ENCODE measurements at regions of chrX and their contacts with region 1.

Region 1: DNA sequence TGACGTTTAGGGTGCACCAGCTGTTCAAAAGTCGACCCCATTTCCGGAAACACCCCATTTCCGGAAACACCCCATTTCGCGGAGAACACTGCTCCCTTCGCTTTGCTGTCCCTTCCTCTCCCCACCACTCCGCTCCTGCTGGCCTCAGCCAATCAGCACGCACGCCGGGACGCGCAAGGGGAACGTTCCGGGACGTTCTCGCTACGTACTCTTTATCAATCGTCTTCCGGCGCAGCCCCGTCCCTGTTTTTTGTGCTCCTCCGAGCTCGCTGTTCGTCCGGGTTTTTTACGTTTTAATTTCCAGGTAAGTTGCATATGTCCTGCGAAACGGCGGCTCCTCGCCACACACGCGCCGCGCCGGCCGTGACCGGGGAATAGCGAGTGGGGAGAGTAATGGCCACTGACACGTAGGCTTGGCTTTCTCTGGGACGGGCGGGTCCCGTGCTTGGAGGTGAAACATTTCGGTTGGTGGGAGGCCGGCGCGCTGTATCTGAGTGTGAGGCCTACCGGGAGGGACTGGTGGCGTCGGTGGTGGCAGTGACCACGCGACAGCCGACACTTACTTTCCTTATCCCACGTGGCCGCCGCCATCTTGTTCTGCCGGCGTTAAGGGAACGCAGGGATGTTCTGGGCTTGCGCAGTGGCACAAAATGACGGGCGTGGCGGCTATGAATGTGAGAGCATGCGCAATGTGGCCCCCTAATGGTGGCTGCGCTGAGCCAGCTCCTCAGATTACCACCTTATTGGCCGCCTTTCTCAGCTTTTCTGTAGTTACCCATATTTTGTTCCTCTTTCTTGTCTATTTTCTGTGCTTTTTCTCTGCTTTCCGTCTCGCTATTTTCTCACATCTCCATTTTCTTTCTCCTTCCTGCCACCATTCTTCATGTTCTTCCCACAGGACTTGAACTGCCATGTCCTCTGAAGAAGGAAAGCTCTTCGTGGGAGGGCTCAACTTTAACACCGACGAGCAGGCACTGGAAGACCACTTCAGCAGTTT is at the start of gene RBM3:
- DNase-seq: peak; percentile 94
- ATAC-seq: peak; percentile 95
- H3K4me3 ChIP-seq: peak within 1 kb of the TSS; percentile 60 to 88 (median 73)
- H3K4me3 Mint-ChIP-seq: peak within 1 kb of the TSS; percentile 88
- H3K27ac ChIP-seq: peak within 1 kb of the TSS; percentile 98 to 99
- H3K27ac Mint-ChIP-seq: peak within 1 kb of the TSS; percentile 97
- H3K4me1 ChIP-seq: peaks cover 16 to 22% of the 10 kb centered on the region in 2 donors
- H3K4me1 Mint-ChIP-seq: peaks cover 21% of the 10 kb centered on the region
- H3K27me3 ChIP-seq: no peaks in the 10 kb centered on the region
- H3K27me3 Mint-ChIP-seq: no peaks in the 10 kb centered on the region
- CTCF ChIP-seq: peak; percentile 43
- total RNA-seq, gene RBM3: 190 and 200 TPM in 2 replicates

Region 2: DNA sequence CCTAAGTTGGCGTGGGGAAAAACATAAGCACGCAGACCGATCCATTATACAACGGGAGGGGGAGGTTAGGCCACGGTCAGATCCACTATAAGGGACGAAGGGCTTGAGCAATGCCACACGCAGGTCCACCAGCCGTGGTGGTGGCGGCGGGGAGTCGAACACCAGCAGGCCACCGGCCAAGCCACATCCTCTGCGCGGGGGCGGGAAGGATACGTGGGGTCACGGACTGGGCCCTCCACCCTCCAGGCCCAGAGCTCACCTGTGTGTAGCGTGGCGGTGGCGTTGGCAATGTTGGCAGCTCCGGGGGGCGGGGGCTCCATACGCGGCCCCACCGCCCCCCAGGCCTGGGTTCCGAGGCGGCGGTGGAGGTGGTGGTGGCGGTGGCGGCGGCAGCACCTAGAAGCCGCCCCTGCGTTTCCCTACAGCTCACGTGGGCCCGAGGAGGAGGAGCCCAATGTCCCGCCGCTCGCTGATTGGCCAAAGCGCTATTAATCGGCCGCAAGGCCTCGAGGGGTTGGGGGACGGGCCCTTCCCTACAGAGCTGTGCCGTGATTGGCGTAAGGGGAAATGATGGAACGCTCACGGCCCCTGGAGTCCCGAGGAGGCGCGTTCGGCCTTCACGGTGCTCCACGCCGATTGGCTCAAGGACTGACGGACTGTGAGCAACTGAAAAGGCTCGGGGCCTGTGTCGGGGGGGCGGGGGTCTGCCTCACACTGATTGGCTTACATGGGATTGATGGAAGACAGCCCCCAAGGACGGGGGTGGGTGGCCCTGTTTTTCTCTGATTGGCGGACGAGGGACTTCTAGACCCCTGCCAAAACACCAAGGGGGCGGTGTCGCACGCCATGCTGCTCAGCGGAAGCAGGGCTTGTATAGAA is 924.2 kb before region 1 on chrX and contains the start of gene ELK1:
- CTCF ChIA-PET with region 1: no interaction called
- POLR2A ChIA-PET with region 1: no interaction called
- intact Hi-C with region 1: loop called (anchors 10 kb)
- DNase-seq: peak; percentile 94
- ATAC-seq: peak; percentile 91
- H3K4me3 ChIP-seq: peak within 1 kb of the TSS in 4 of 5 experiments; percentile 68 to 77 (median 75)
- H3K4me3 Mint-ChIP-seq: peak within 1 kb of the TSS; percentile 93
- H3K27ac ChIP-seq: peak within 1 kb of the TSS; percentile 69 to 73
- H3K27ac Mint-ChIP-seq: peak within 1 kb of the TSS; percentile 94
- H3K4me1 ChIP-seq: peaks cover 11 to 26% of the 10 kb centered on the region in 2 donors
- H3K4me1 Mint-ChIP-seq: peaks cover 29% of the 10 kb centered on the region
- H3K27me3 ChIP-seq: no peaks in the 10 kb centered on the region
- H3K27me3 Mint-ChIP-seq: no peaks in the 10 kb centered on the region
- CTCF ChIP-seq: no peak
- total RNA-seq, gene ELK1: 20.8 and 22.7 TPM in 2 replicates

Region 3: DNA sequence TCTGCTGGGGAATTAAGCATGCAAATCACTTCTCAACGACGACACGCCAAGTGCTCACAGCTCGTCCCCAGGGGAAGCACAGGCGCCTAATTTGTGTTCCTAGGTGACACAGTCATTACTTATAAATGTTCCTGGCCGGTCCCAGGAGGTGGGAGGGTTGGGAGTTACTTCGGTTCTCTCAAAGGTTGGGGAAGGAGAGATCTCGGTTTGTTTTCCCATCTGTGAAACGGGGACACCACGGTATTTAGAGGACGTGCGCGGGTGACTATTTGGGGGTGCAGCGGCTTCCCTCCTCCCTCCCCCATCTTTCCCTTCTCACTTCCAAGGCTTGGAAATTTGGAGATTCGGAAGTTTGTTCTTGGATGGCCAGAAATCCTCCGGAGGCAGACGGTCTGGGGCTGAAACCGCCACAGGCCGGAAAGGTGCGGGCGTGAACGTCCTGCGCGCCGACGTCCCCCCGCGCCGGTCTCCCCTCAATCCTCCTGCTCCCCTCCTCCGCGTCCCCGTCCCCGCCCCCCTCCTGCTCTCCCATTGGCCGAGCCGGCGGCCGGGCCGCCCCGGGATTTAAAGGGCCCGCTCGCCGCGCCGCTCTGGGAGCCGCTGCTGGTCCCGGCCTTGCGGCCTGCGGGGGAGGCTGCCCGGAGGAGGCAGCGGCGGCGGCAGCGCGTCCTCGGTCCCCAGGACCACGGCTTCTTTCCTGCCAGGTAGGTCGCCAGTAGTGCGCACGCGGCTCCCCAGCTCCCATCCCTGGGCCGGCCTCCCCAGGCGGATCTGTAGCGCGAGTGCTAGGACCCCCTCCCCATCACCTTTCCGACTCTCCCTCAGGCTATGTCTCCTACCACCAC is 65.9 kb before region 1 on chrX and contains the start of gene PORCN:
- CTCF ChIA-PET with region 1: no interaction called
- POLR2A ChIA-PET with region 1: interaction called, 7 read pairs
- intact Hi-C with region 1: loop called (anchors 1 kb)
- DNase-seq: peak; percentile 82
- ATAC-seq: peak; percentile 92
- H3K4me3 ChIP-seq: peak within 1 kb of the TSS; percentile 58 to 82 (median 74)
- H3K4me3 Mint-ChIP-seq: peak within 1 kb of the TSS; percentile 92
- H3K27ac ChIP-seq: peak within 1 kb of the TSS; percentile 89 to 92
- H3K27ac Mint-ChIP-seq: peak within 1 kb of the TSS; percentile 96
- H3K4me1 ChIP-seq: peaks cover 3 to 13% of the 10 kb centered on the region in 2 donors
- H3K4me1 Mint-ChIP-seq: peaks cover 12% of the 10 kb centered on the region
- H3K27me3 ChIP-seq: no peaks in the 10 kb centered on the region
- H3K27me3 Mint-ChIP-seq: no peaks in the 10 kb centered on the region
- CTCF ChIP-seq: no peak
- total RNA-seq, gene PORCN: 12.8 and 13.0 TPM in 2 replicates

Region 4: DNA sequence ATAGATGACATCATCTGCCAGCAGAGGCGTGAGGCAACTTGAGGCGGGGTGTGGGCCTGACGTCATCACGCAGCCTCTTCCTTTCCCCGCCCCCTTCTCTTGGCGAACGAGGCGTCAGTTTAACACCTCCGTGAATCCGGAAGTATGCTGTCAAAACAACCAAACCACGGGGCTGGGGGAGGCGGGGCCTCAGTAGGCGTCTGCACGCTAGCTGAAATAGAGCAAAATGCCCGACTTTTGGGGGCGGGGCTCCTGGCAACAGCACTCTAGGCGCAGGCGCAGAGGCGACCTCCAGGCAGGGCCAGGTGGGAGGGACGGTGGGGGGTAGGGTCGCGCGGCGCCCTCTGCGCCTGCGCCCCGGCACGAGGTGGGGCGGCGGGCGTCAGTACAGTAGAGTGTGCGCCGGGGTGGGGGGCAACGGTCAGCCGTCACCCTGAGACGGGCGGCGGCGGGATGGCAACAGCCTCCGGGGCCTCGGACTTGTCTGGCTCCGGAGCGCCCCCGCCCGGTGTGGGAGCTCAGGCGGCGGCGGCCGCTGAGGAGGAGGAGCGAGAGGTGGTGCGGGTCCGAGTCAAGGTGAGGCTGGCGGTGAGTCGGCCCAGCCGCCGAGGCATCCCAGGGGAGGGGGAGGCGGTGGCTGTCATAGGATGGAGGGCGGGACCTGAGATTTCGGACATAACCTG is 35.1 kb before region 1 on chrX and contains the start of gene TBC1D25:
- CTCF ChIA-PET with region 1: no interaction called
- POLR2A ChIA-PET with region 1: interaction called, 20 read pairs
- intact Hi-C with region 1: loop called (anchors 1 kb)
- DNase-seq: peak; percentile 97
- ATAC-seq: peak; percentile 79
- H3K4me3 ChIP-seq: peak within 1 kb of the TSS in 4 of 5 experiments; percentile 66 to 76 (median 74)
- H3K4me3 Mint-ChIP-seq: peak within 1 kb of the TSS; percentile 91
- H3K27ac ChIP-seq: peak within 1 kb of the TSS; percentile 94 to 97
- H3K27ac Mint-ChIP-seq: peak within 1 kb of the TSS; percentile 97
- H3K4me1 ChIP-seq: peaks cover 10 to 18% of the 10 kb centered on the region in 2 donors
- H3K4me1 Mint-ChIP-seq: peaks cover 20% of the 10 kb centered on the region
- H3K27me3 ChIP-seq: no peaks in the 10 kb centered on the region
- H3K27me3 Mint-ChIP-seq: no peaks in the 10 kb centered on the region
- CTCF ChIP-seq: peak; percentile 50
- total RNA-seq, gene TBC1D25: 24.6 and 25.2 TPM in 2 replicates